Mammary epithelial cell (primary cell): ENCODE measurements at regions of chr6 and their contacts with region 1.

Region 1: GRCh38 chr6:77124604-77125003 is 338.7 kb downstream of the HTR1B start:
- DNase-seq: peak; percentile 75
- H3K4me3 ChIP-seq: no peak overlapping the region
- H3K27ac ChIP-seq: no peak overlapping the region
- H3K4me1 ChIP-seq: peaks cover 11% of the 10 kb centered on the region
- H3K27me3 ChIP-seq: no peaks in the 10 kb centered on the region
- CTCF ChIP-seq: peak; percentile 34 to 60

Region 2: GRCh38 chr6:76697585-76697984 is 427.0 kb before region 1 on chr6:
- CTCF ChIA-PET with region 1: no interaction called
- dilution Hi-C with region 1: no loop called
- in situ Hi-C with region 1: no loop called
- intact Hi-C with region 1: loop called (anchors 10 kb)
- DNase-seq: no peak
- H3K4me3 ChIP-seq: no peak overlapping the region
- H3K27ac ChIP-seq: no peak overlapping the region
- H3K4me1 ChIP-seq: no peaks in the 10 kb centered on the region
- H3K27me3 ChIP-seq: no peaks in the 10 kb centered on the region
- CTCF ChIP-seq: peak; percentile 30 to 45

Region 3: GRCh38 chr6:77173472-77174074 is 49.0 kb after region 1 on chr6:
- CTCF ChIA-PET with region 1: no interaction called
- dilution Hi-C with region 1: no loop called
- in situ Hi-C with region 1: no loop called
- intact Hi-C with region 1: no loop called
- DNase-seq: peak; percentile 5
- H3K4me3 ChIP-seq: no peak overlapping the region
- H3K27ac ChIP-seq: no peak overlapping the region
- H3K4me1 ChIP-seq: no peaks in the 10 kb centered on the region
- H3K27me3 ChIP-seq: no peaks in the 10 kb centered on the region
- CTCF ChIP-seq: no peak